Right lobe of liver (tissue), 6 donors: ENCODE measurements at regions of chr18 and their contacts with region 1.

Region 1: DNA sequence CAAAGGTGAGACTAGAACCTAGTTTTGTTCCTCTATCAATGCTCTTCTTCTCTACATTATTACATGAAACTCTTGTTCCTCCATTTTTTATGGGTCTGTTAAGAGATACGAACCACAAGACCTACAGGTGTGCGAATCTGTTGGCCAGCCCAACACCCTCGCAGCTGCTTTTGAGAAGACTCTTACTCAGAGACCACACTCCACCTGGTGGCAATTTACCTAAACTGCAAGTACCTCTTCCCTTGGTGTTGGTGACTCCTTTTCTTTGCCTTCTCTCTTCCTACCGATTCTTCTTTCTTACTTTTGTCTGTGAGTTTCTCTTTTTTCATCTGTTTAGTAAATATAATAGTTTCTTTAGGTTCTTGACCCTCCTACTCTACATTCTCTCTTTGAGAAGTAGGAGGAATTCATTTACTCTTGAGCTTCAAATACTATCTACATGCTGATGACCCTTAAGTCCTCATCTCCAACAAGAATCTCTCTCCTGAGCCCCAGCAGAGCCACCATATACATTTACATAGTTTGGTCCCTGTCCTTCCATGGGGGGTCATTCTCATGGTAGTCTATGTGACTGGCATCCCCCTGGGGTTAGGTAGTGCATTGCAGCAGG is 81.8 kb upstream of the GAREM1 start:
- DNase-seq: peak; percentile 35 to 72 (median 56)
- ATAC-seq: peak; percentile 91 to 96 (median 95)
- H3K4me3 ChIP-seq: no peak overlapping the region
- H3K27ac ChIP-seq: no peak overlapping the region
- H3K4me1 ChIP-seq: no peaks in the 10 kb centered on the region
- H3K27me3 ChIP-seq: no peaks in the 10 kb centered on the region
- CTCF ChIP-seq: peak; percentile 78 to 83 (median 81)
- POLR2A ChIP-seq: no peak

Region 2: GRCh38 chr18:32158108-32158624 is 394.4 kb before region 1 on chr18:
- intact Hi-C with region 1: loop called (anchors 5 to 10 kb)
- DNase-seq: peak; percentile 72 to 84 (median 80)
- ATAC-seq: peak; percentile 99 to 100 (median 100)
- H3K4me3 ChIP-seq: peak overlapping the region; percentile 6 to 20 (median 18)
- H3K27ac ChIP-seq: no peak overlapping the region
- H3K4me1 ChIP-seq: no peaks in the 10 kb centered on the region
- H3K27me3 ChIP-seq: no peaks in the 10 kb centered on the region
- CTCF ChIP-seq: peak; percentile 75 to 88 (median 84)
- POLR2A ChIP-seq: no peak

Region 3: GRCh38 chr18:32742579-32742978 is 190.1 kb after region 1 on chr18:
- intact Hi-C with region 1: no loop called
- DNase-seq: no peak
- ATAC-seq: no peak
- H3K4me3 ChIP-seq: no peak overlapping the region
- H3K27ac ChIP-seq: no peak overlapping the region
- H3K4me1 ChIP-seq: no peaks in the 10 kb centered on the region
- H3K27me3 ChIP-seq: no peaks in the 10 kb centered on the region
- CTCF ChIP-seq: no peak
- POLR2A ChIP-seq: no peak